Ascending aorta (tissue), 2 donors: ENCODE measurements at regions of chr5 and their contacts with region 1.

Region 1: DNA sequence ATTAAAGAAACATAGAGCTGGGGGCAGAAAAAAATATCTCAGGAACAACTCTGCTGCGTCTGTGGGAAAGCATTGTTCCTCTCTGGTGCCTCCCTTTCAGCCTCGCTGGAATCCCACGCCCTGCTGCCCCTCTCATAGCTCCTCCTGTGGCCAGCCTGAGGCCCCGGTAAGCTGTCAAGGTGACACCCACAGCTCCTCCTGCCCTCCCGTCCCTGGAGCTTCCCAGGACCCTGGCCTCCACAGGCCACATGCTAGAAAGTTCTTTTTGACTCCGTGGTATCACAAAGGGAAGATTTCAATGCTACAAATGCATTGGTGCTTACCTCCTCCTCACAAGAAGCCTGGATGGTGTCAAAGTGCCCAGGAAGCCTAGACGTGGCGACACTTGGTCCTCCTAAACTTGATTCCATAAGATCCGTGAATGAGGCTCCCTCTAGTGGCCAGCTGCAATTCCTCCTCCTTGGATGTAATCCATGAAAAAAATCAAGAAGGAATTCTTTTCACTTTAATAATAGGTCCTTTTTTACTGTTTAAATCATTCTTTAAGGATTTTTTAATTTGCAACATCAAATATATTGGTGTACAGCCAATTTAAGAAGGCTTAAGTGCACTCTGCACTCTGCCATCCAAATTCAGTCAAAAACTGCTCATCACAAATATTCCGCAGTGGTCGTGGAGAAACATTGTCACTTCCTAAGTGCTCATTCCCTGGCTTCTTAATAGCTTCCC is 104.9 kb downstream of the CFAP90 start:
- DNase-seq: peak in 1 of 2 donors; percentile 83
- H3K4me3 ChIP-seq: no peak overlapping the region
- H3K27ac ChIP-seq: no peak overlapping the region
- H3K4me1 ChIP-seq: no peaks in the 10 kb centered on the region
- H3K27me3 ChIP-seq: no peaks in the 10 kb centered on the region
- CTCF ChIP-seq: peak; percentile 58 to 83 (median 82)

Region 2: DNA sequence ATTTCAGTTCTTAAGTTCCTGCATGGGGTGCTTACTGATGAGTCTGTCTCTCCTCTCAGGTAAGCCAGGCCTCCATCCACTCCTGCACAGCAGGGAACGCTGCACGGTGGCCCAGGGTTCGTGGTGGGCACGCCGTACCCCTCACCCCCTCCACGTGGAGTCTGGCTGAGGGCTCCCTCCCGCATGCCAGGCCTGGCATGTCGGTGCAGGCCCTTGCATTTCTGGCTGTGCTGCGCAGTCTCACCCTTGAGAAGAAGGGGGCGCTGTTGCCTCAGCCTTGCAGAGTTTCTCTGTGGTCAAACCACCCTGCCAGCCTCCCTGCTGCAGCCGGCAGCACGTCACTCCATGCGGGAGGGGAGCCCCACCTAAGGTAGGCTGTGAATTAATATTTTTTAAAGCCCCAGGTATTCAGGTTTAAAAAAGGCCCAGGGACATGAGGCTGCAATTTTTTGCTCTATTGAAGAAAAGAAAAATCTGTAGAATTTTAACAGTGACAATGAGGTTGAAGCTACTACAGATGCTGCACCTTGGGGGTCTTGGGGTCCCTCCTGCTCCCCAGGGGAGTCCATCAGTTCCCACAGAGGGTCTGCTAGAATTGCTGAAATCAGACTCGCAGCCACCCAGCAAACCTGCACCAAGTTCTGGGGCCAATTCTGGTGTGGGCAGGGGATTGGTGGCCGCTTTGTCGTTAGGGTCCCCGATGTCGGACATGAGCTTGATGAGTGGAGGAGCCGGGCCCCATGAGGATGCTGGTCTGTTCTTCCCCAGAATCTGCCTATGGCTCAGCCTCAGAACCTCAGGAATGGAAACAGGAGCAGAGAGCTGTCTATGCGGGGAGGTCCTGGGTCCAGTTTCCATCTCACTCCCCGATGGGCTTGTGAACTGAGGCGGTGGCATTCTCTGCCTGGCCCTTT is 980.2 kb before region 1 on chr5:
- intact Hi-C with region 1: loop called (anchors 5 kb)
- DNase-seq: peak in 1 of 2 donors; percentile 86
- H3K4me3 ChIP-seq: peak overlapping the region in 1 of 2 donors; percentile 41
- H3K27ac ChIP-seq: peak overlapping the region; percentile 84 to 87
- H3K4me1 ChIP-seq: peaks cover 4 to 13% of the 10 kb centered on the region in 2 donors
- H3K27me3 ChIP-seq: no peaks in the 10 kb centered on the region
- CTCF ChIP-seq: peak; percentile 76 to 92 (median 80)

Region 3: GRCh38 chr5:7261049-7261448 is 485.0 kb before region 1 on chr5:
- intact Hi-C with region 1: loop called (anchors 1 kb)
- DNase-seq: no peak
- H3K4me3 ChIP-seq: no peak overlapping the region
- H3K27ac ChIP-seq: no peak overlapping the region
- H3K4me1 ChIP-seq: no peaks in the 10 kb centered on the region
- H3K27me3 ChIP-seq: no peaks in the 10 kb centered on the region
- CTCF ChIP-seq: peak; percentile 29 to 57 (median 33)

Region 4: DNA sequence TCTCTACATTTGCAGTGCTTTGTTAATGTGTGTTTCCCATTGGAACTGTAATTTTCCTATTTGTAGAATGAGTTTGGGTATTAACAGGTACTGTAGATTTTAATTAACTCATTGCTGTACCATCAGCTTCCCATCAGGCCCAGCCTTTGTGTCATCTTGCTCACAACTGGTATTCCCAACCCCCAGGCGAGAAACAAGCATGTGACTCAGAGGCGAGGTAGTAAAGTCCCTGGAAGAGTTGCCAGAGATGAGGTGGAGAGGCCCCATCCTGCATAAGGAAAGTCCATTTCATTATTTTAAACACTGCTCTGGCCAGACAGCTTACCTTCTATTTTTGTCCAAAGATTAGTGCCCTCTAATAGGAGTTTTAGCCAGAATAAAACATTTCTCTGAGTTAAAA is 320.2 kb before region 1 on chr5:
- intact Hi-C with region 1: no loop called
- DNase-seq: no peak
- H3K4me3 ChIP-seq: no peak overlapping the region
- H3K27ac ChIP-seq: no peak overlapping the region
- H3K4me1 ChIP-seq: peaks cover 0 to 7% of the 10 kb centered on the region in 2 donors
- H3K27me3 ChIP-seq: no peaks in the 10 kb centered on the region
- CTCF ChIP-seq: no peak

Region 5: GRCh38 chr5:7686794-7687193 is 59.3 kb before region 1 on chr5:
- intact Hi-C with region 1: no loop called
- DNase-seq: no peak
- H3K4me3 ChIP-seq: no peak overlapping the region
- H3K27ac ChIP-seq: no peak overlapping the region
- H3K4me1 ChIP-seq: no peaks in the 10 kb centered on the region
- H3K27me3 ChIP-seq: no peaks in the 10 kb centered on the region
- CTCF ChIP-seq: no peak

Region 6: GRCh38 chr5:7815892-7816534 is 70.0 kb after region 1 on chr5:
- intact Hi-C with region 1: loop called (anchors 5 kb)
- DNase-seq: peak; percentile 22 to 90
- H3K4me3 ChIP-seq: peak overlapping the region in 1 of 2 donors; percentile 34
- H3K27ac ChIP-seq: no peak overlapping the region
- H3K4me1 ChIP-seq: no peaks in the 10 kb centered on the region
- H3K27me3 ChIP-seq: no peaks in the 10 kb centered on the region
- CTCF ChIP-seq: peak; percentile 69 to 90 (median 80)